Astrocyte of the cerebellum (primary cell): ENCODE measurements at regions of chr7 and their contacts with region 1.

Region 1: GRCh38 chr7:101898106-101898505 is 80.7 kb downstream of the CUX1 start:
- DNase-seq: no peak
- H3K4me3 ChIP-seq: no peak overlapping the region
- CTCF ChIP-seq: no peak

Region 2: GRCh38 chr7:101733713-101734475 is 164.2 kb before region 1 on chr7:
- in situ Hi-C with region 1: no loop called
- DNase-seq: no peak
- H3K4me3 ChIP-seq: peak overlapping the region; percentile 21
- CTCF ChIP-seq: no peak

Region 3: DNA sequence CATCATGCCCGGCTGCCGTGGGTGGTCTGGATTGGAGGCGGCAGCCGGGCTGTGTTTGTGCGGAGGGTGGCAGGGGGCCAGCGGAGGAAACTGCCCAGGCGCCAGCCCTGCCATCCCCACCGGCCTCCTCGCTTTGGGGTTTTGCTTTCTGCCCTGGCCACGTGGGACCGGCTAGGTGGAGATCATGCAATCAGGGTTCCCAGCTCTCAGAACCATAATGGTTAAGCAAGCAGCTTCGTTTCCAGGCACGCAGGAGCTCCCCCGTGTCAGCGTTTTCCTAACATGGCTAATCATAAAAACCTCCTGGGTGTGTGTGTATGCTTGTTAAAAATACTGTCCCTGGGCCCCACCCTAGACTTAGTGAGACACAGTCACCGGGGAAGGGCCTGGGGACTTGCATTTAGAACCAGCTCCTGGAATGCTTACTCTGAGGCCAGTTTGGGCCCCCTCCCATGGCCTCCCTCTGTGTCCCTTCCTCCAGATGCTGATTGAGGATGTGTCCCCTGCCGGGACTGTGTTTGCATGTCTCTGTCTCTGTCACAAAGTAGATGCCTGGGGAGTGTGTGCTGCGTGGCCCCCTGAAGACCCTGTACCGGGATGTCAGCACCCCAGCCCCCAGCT is 38.6 kb after region 1 on chr7:
- in situ Hi-C with region 1: loop called (anchors 5 kb)
- DNase-seq: no peak
- H3K4me3 ChIP-seq: peak overlapping the region; percentile 13
- CTCF ChIP-seq: no peak